ENCODE measurements at regions of chr1 and their contacts with region 1.

Region 1: GRCh38 chr1:39158327-39159086 is 46.0 kb upstream of the MACF1 start:
- DNase-seq: peak; percentile 87 to 91
- H3K4me3 ChIP-seq: peak overlapping the region; percentile 60
- H3K4me3 Mint-ChIP-seq: peak overlapping the region; percentile 73
- H3K27ac Mint-ChIP-seq: peak overlapping the region; percentile 80
- H3K4me1 ChIP-seq: peaks cover 4% of the 10 kb centered on the region
- H3K4me1 Mint-ChIP-seq: peaks cover 5% of the 10 kb centered on the region
- H3K27me3 ChIP-seq: no peaks in the 10 kb centered on the region
- H3K27me3 Mint-ChIP-seq: no peaks in the 10 kb centered on the region
- CTCF ChIP-seq: peak in 1 of 2 experiments; percentile 28

Region 2: DNA sequence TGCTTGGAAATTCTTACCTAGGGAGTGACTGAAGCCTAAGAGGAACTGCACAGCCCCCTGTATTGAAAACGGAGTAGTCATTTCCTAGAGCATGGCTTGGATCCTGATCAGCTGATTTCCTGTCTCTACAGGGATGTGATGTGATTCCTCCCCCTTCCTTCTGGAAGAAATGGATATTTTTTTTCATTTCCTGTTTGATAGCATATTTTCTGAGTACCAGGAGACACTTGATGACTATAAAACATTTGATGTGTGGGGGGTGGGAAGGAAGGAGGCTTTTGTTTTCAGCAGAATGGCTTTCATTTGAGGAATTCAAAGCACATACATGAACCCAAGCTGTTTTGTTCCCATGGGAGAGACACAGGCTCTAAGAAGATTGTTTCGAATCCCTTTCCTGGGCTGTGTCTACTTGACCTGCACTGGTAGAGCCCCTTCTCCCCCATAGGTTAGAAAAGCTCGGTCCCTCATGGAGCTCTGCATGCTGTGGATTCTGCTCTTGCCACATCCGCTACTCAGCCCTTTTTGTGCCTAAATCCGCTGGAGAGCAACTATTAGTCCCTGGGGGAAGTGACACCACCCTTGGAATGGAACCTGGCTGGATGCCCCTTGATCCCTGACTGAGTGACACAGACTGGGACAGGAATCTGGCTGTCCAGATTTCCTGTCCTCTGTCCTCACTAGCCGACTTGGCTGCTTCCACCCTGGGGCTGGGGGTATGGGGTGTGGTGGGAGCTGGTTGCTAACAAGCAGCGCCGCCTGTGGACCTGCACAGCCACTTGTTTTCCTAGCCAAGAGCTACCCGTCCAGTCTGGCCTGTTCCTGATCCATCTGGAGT is 25.8 kb before region 1 on chr1:
- CTCF ChIA-PET with region 1: interaction called, 14 read pairs
- POLR2A ChIA-PET with region 1: interaction called, 4 read pairs
- intact Hi-C with region 1: loop called (anchors 1 kb)
- DNase-seq: peak; percentile 88 to 93
- H3K4me3 ChIP-seq: no peak overlapping the region
- H3K4me3 Mint-ChIP-seq: peak overlapping the region; percentile 50
- H3K27ac Mint-ChIP-seq: peak overlapping the region; percentile 77
- H3K4me1 ChIP-seq: peaks cover 22% of the 10 kb centered on the region
- H3K4me1 Mint-ChIP-seq: peaks cover 18% of the 10 kb centered on the region
- H3K27me3 ChIP-seq: no peaks in the 10 kb centered on the region
- H3K27me3 Mint-ChIP-seq: no peaks in the 10 kb centered on the region
- CTCF ChIP-seq: peak in 1 of 2 experiments; percentile 52

Region 3: DNA sequence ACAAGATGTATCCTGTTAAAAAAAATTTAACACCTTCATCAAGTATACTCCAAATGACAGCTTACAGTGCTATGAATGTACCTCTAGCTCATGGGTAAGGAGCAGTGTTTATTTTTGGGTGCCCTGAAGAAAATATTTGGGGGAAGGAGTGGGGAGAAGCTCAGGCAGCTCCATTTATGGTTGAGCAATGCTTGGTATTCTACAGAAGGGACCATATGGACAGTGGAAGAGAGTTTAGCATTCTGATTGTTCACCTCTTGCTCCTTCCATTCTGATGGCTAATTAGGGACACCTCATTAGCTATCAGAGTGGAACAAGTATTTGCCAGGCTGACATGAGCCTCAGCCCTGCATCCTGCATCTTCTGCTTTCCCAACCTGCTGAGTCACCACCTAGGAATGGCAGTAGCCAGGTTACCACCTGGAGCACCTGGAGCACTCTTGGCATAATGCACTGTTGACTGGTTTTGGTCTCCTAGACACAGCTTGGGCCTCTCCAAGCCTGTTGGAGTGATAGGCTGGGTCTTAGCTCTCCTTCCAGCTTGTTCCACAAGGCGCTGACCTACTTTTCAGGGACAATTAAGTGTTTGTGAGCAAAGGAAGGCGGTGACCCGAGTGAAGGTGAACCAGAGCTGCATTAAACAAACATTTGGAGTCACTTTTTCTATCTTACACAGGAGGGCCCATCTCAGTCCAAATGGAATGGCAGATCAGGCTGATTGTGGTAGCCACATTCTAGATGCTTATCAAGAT is 15.9 kb before region 1 on chr1:
- CTCF ChIA-PET with region 1: interaction called, 8 read pairs
- POLR2A ChIA-PET with region 1: interaction called, 4 read pairs
- intact Hi-C with region 1: loop called (anchors 1 kb)
- DNase-seq: peak; percentile 45 to 47
- H3K4me3 ChIP-seq: no peak overlapping the region
- H3K4me3 Mint-ChIP-seq: no peak overlapping the region
- H3K27ac Mint-ChIP-seq: peak overlapping the region; percentile 37
- H3K4me1 ChIP-seq: peaks cover 28% of the 10 kb centered on the region
- H3K4me1 Mint-ChIP-seq: peaks cover 32% of the 10 kb centered on the region
- H3K27me3 ChIP-seq: no peaks in the 10 kb centered on the region
- H3K27me3 Mint-ChIP-seq: no peaks in the 10 kb centered on the region
- CTCF ChIP-seq: no peak

Region 4: GRCh38 chr1:39170731-39171667 is 12.5 kb after region 1 on chr1:
- CTCF ChIA-PET with region 1: interaction called, 6 read pairs
- POLR2A ChIA-PET with region 1: interaction called, 13 read pairs
- intact Hi-C with region 1: loop called (anchors 1 kb)
- DNase-seq: peak; percentile 41 to 48
- H3K4me3 ChIP-seq: no peak overlapping the region
- H3K4me3 Mint-ChIP-seq: peak overlapping the region; percentile 23
- H3K27ac Mint-ChIP-seq: peak overlapping the region; percentile 50
- H3K4me1 ChIP-seq: peaks cover 43% of the 10 kb centered on the region
- H3K4me1 Mint-ChIP-seq: peaks cover 29% of the 10 kb centered on the region
- H3K27me3 ChIP-seq: no peaks in the 10 kb centered on the region
- H3K27me3 Mint-ChIP-seq: no peaks in the 10 kb centered on the region
- CTCF ChIP-seq: no peak

Region 5: DNA sequence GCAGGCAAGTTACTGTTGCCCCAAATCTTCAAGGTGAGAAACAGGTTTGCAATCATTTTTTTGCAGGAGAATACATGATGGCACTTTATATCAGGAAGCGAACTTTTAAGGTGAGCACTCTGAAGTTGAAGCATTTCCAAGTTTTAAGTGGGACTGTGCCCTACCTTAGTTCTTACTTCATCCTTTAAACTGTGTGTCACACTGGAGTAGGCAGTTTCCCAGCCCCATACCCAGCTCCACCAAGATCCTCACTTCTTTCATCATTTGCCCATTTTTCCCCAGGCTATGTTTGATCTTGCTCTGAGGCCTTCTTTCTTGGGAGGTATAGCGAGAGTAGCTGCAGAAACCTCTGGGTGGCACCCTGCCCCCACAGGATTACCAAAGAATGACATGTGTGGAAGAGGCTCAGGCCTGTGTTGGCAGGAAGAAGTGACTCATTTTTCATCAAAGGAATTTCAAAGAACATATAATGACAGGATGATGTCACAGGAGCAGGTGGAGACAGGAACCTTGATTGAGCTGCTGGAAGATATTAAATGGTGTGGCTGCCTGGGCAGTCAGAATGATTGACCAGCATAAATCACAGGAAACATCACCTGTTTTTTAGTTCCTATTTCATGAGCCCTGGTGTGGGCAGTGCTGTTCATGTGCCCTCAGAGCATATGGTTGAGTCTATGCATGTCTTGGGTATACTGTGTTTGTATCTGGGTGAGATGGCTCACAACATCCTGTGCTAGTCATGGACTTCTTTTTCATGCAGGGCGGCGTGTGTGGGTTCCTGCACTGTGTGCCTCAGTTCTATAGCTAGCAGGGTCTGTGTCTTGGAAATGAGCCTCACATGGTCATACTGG is 25.2 kb after region 1 on chr1:
- CTCF ChIA-PET with region 1: interaction called, 11 read pairs
- POLR2A ChIA-PET with region 1: interaction called, 6 read pairs
- intact Hi-C with region 1: no loop called
- DNase-seq: peak; percentile 86
- H3K4me3 ChIP-seq: no peak overlapping the region
- H3K4me3 Mint-ChIP-seq: peak overlapping the region; percentile 30
- H3K27ac Mint-ChIP-seq: peak overlapping the region; percentile 86
- H3K4me1 ChIP-seq: peaks cover 29% of the 10 kb centered on the region
- H3K4me1 Mint-ChIP-seq: peaks cover 25% of the 10 kb centered on the region
- H3K27me3 ChIP-seq: no peaks in the 10 kb centered on the region
- H3K27me3 Mint-ChIP-seq: no peaks in the 10 kb centered on the region
- CTCF ChIP-seq: peak; percentile 41 to 48

Region 6: DNA sequence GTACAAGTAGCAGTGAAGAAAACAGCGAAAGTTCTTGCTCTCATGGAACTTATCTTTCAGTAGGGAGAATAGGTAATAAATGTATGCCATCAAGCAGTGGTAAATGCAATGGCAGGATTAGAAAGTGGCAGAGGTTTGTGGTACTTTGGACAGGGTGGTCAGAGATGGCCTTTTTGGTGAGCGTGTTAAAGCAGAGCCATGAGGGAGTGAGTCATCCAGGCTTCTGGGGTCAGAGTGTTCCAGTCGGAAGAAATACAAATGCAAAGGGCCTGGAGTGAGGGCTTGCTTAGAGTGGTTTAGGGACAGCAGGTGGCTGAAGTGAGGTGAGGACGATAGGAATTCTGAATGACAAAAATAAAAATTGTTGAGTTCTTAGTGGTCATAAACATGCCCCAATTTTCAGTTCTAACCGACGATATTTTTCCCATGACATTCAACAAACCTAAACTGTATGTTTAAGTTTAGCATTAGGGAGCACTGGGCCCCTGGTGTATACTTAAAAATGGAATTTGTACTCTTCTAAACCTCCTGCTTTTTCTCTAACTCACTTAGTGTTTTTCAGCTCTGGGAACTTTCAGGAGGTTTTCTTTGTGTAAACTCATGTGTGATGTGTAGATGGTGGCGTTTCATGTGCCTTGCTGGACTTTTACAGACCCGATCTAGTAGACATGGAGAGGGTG is 124.2 kb after region 1 on chr1:
- CTCF ChIA-PET with region 1: no interaction called
- POLR2A ChIA-PET with region 1: interaction called, 12 read pairs
- intact Hi-C with region 1: no loop called
- DNase-seq: no peak
- H3K4me3 ChIP-seq: no peak overlapping the region
- H3K4me3 Mint-ChIP-seq: no peak overlapping the region
- H3K27ac Mint-ChIP-seq: no peak overlapping the region
- H3K4me1 ChIP-seq: peaks cover 21% of the 10 kb centered on the region
- H3K4me1 Mint-ChIP-seq: peaks cover 12% of the 10 kb centered on the region
- H3K27me3 ChIP-seq: no peaks in the 10 kb centered on the region
- H3K27me3 Mint-ChIP-seq: no peaks in the 10 kb centered on the region
- CTCF ChIP-seq: no peak